H1 (cell line): ENCODE measurements at regions of chr12 and their contacts with region 1.

Region 1: DNA sequence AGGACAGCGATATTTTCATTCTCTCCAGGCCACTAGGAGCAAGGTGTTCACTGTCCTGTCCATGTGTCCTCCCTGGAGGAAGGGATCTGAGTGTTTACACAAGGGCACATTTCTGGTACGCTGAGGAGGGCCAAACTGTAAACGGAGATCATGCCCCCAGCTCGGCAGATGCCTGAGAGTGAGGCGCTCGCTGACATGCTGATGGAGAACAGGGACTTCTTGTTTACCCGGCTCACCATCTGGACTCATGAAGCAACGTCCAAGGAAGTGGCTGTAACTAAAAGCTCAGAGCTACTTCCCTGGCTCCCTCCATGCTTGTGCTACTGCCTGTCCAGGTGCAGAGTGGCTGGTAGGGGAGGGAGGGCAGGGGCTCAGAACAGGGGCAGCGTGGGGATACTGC is 43.4 kb upstream of the KCNA1 start:
- DNase-seq: no peak
- H3K4me3 ChIP-seq: no peak overlapping the region
- H3K27ac ChIP-seq: no peak overlapping the region
- H3K4me1 ChIP-seq: no peaks in the 10 kb centered on the region
- H3K27me3 ChIP-seq: no peaks in the 10 kb centered on the region
- CTCF ChIP-seq: no peak
- EP300 ChIP-seq: no peak
- POLR2A ChIP-seq: no peak
- RAD21 ChIP-seq: no peak

Region 2: GRCh38 chr12:4621511-4621910 is 244.8 kb before region 1 on chr12:
- CTCF ChIA-PET with region 1: no interaction called
- POLR2A ChIA-PET with region 1: no interaction called
- DNase-seq: no peak
- H3K4me3 ChIP-seq: no peak overlapping the region
- H3K27ac ChIP-seq: no peak overlapping the region
- H3K4me1 ChIP-seq: no peaks in the 10 kb centered on the region
- H3K27me3 ChIP-seq: no peaks in the 10 kb centered on the region; a peak in 1 of 7 replicates
- CTCF ChIP-seq: no peak
- EP300 ChIP-seq: no peak
- POLR2A ChIP-seq: no peak
- RAD21 ChIP-seq: no peak

Region 3: GRCh38 chr12:4849115-4849541 is 17.2 kb before region 1 on chr12:
- CTCF ChIA-PET with region 1: interaction called, 107 read pairs
- POLR2A ChIA-PET with region 1: no interaction called
- DNase-seq: no peak
- H3K4me3 ChIP-seq: no peak overlapping the region
- H3K27ac ChIP-seq: no peak overlapping the region
- H3K4me1 ChIP-seq: no peaks in the 10 kb centered on the region
- H3K27me3 ChIP-seq: no peaks in the 10 kb centered on the region
- CTCF ChIP-seq: peak in 2 of 3 experiments; percentile 12 to 26; a peak in 2 of 4 replicates
- EP300 ChIP-seq: no peak
- POLR2A ChIP-seq: no peak
- RAD21 ChIP-seq: peak in 1 of 2 experiments; percentile 7; a peak in 1 of 4 replicates